PC-9 (cell line): ENCODE measurements at regions of chr9 and their contacts with region 1.

Region 1: GRCh38 chr9:129139993-129140396 is 28.8 kb downstream of the PTPA start:
- DNase-seq: peak; percentile 85 to 95
- H3K4me3 ChIP-seq: peak overlapping the region; percentile 91
- H3K27ac ChIP-seq: peak overlapping the region; percentile 100
- H3K4me1 ChIP-seq: peaks cover 43% of the 10 kb centered on the region
- H3K27me3 ChIP-seq: no peaks in the 10 kb centered on the region
- CTCF ChIP-seq: no peak

Region 2: DNA sequence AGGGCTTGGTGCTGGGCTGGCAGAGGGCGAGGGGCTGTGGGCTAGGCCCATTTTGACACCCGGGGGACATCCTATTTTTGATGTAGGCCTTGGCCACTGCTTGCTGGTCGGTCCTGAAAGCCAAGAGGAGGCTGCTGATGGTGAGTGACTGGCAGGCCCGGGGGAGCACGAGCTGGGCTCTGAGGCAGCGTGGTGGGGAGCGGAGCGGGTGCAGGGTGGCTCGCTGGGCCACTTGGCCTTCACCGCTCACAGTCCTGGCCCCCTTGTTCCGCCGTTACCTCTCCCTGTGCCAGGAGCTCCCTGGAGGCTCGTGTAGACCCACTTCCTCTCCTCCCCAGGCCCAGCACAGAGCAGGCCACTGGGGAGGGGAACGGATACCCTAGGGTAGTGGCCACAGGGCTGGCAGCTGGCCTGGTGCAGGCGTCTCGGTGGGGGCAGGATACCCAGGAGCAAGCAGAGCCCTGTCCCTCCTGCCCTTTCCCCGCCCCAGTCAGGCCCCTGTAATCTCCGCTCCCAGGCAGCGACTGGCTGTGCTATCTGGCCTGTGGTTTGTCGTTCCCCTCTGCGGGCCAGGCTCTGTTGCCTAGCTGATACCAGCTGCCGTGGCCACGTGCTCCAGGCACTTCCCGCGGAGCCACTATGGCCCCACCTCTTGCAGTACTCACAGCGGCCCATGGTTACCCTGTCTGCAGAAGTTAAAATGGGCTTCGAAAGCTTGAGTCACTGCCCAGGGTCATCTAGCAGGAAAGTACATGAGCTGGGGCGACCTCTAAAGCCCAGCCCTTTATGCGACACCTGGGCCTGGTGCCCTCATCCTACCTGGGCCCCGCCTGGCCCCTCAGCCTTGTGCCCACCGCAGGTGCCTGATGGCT is 70.8 kb before region 1 on chr9:
- CTCF ChIA-PET with region 1: no interaction called
- POLR2A ChIA-PET with region 1: no interaction called
- intact Hi-C with region 1: no loop called
- DNase-seq: peak in 1 of 2 experiments; percentile 33
- H3K4me3 ChIP-seq: no peak overlapping the region
- H3K27ac ChIP-seq: no peak overlapping the region
- H3K4me1 ChIP-seq: no peaks in the 10 kb centered on the region
- H3K27me3 ChIP-seq: no peaks in the 10 kb centered on the region
- CTCF ChIP-seq: no peak

Region 3: DNA sequence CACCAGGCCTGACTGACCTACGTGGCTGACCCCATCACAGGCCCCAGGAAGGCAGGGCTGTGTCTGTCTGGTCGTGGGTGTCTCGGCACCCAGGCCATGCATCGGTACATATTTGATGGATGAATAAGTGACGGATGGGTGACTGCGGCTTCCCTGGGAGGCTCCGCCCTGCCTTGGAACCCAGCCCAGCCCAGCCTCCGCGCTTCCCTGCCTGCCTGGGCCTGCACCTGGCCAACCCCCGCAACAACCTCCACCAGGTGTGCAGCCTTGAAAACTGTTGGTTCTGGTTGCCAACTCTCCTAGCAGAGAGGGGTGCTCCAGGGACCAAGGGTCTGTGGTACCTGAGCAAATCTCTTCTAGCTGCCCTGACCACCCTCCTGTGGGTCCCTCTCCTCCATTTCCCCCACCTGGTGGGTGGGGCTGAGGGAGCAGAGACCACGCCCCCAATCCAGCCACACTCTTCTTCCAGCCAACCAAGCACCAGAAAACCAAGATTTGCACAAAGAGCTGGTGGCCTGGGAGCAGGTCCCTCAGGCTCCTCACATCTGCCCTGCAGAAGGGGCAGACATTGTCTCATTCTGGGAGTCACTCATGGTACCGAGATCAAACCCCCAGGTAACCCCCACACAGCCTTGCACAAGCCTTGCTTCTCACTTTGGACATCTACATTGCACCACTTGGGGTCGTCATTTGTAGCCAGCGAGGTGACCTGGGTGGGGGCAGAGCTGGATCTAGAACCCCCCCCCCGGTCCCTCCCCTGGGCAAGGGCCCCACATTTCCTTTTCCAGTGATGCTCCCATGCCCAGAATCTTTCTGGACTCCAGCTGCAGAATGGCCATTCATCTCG is 138.6 kb after region 1 on chr9:
- CTCF ChIA-PET with region 1: interaction called, 3 read pairs
- POLR2A ChIA-PET with region 1: no interaction called
- intact Hi-C with region 1: loop called (anchors 1 kb)
- DNase-seq: peak; percentile 86 to 97
- H3K4me3 ChIP-seq: peak overlapping the region; percentile 58; the same call in 1 of the 2 replicates
- H3K27ac ChIP-seq: peak overlapping the region; percentile 79
- H3K4me1 ChIP-seq: peaks cover 51% of the 10 kb centered on the region
- H3K27me3 ChIP-seq: no peaks in the 10 kb centered on the region
- CTCF ChIP-seq: no peak

Region 4: GRCh38 chr9:129487642-129488409 is 347.8 kb after region 1 on chr9:
- CTCF ChIA-PET with region 1: interaction called, 5 read pairs
- POLR2A ChIA-PET with region 1: interaction called, 5 read pairs
- intact Hi-C with region 1: loop called (anchors 1 kb)
- DNase-seq: no peak
- H3K4me3 ChIP-seq: peak overlapping the region; percentile 66
- H3K27ac ChIP-seq: peak overlapping the region; percentile 91
- H3K4me1 ChIP-seq: peaks cover 72% of the 10 kb centered on the region
- H3K27me3 ChIP-seq: no peaks in the 10 kb centered on the region
- CTCF ChIP-seq: no peak